ENCODE measurements at regions of chr3 and their contacts with region 1.

Region 1: GRCh38 chr3:62823461-62824050 is 51.7 kb downstream of the CADPS start:
- DNase-seq: no peak

Region 2: GRCh38 chr3:62749657-62750056 is 73.9 kb before region 1 on chr3:
- intact Hi-C with region 1: loop called in 1 of 2 experiments (anchors 2 kb)
- DNase-seq: no peak